Gastrocnemius medialis (tissue), 4 donors: ENCODE measurements at regions of chrX and their contacts with region 1.

Region 1: GRCh38 chrX:153507484-153508178 is 9.8 kb upstream of the ATP2B3 start:
- DNase-seq: peak; percentile 40 to 68
- ATAC-seq: peak; percentile 79 to 89
- H3K4me3 ChIP-seq: no peak overlapping the region
- H3K27ac ChIP-seq: no peak overlapping the region
- H3K4me1 ChIP-seq: no peaks in the 10 kb centered on the region
- H3K27me3 ChIP-seq: no peaks in the 10 kb centered on the region
- CTCF ChIP-seq: peak; percentile 51 to 89 (median 82)
- POLR2A ChIP-seq: no peak

Region 2: GRCh38 chrX:153470435-153471363 is 36.9 kb before region 1 on chrX and contains the start of gene HAUS7:
- in situ Hi-C with region 1: no loop called
- intact Hi-C with region 1: loop called (anchors 2 kb)
- DNase-seq: peak; percentile 76 to 86
- ATAC-seq: peak; percentile 87 to 89
- H3K4me3 ChIP-seq: peak within 1 kb of the TSS; percentile 56 to 71 (median 61)
- H3K27ac ChIP-seq: peak within 1 kb of the TSS; percentile 66 to 81 (median 78)
- H3K4me1 ChIP-seq: peaks cover 0 to 9% of the 10 kb centered on the region in 2 donors
- H3K27me3 ChIP-seq: no peaks in the 10 kb centered on the region
- CTCF ChIP-seq: peak; percentile 37 to 69 (median 63)
- POLR2A ChIP-seq: no peak
- total RNA-seq, gene HAUS7: 10.6 to 19.8 (median 13.2) TPM

Region 3: GRCh38 chrX:153714256-153714655 is 206.6 kb after region 1 on chrX:
- in situ Hi-C with region 1: no loop called
- intact Hi-C with region 1: no loop called
- DNase-seq: no peak
- ATAC-seq: no peak
- H3K4me3 ChIP-seq: no peak overlapping the region
- H3K27ac ChIP-seq: no peak overlapping the region
- H3K4me1 ChIP-seq: peaks cover 5 to 9% of the 10 kb centered on the region in 2 donors
- H3K27me3 ChIP-seq: no peaks in the 10 kb centered on the region
- CTCF ChIP-seq: no peak
- POLR2A ChIP-seq: no peak